Endothelial cell of umbilical vein (primary cell): ENCODE measurements at regions of chr5 and their contacts with region 1.

Region 1: DNA sequence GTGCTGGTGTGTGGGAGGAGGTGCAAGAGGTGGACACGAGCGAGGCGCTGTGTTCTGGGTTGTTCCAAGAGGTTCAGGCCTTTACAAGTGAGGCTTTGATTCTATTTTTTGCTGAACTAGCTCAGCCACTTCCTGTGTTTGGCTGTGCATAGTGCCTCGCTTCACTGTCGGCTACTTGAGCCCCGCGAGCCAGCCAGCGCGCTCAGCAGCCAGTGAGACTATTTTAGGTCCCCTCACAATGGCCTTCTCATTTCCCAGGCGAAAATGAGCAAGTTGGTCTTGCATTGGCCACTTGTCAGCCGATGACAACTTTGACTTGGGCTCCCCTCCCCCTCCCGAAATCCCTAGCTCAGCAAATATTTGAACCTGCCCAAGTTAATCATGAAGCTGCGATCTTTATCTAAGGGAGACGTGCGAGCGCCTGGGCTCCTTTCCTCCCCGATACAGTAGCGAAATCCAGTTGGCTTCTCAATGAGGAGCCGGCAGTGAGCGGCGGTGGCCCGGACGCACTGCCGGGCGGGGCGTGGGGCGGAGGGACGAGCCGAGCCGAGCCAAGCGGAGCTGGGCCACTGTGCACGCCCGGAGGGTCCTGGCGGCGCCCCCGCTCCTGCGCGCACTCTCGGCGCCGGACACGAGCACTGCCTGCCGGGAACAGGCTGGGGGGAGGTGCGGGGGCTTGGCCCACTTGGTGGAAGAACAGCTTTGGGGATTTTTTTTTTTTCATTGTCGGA is 72.6 kb downstream of the PIK3R1 start:
- DNase-seq: peak; percentile 73
- H3K4me3 ChIP-seq: peak overlapping the region; percentile 44 to 63 (median 60)
- H3K27ac ChIP-seq: peak overlapping the region; percentile 49
- H3K4me1 ChIP-seq: peaks cover 11% of the 10 kb centered on the region
- H3K27me3 ChIP-seq: no peaks in the 10 kb centered on the region
- CTCF ChIP-seq: no peak
- POLR2A ChIP-seq: peak; percentile 25

Region 2: DNA sequence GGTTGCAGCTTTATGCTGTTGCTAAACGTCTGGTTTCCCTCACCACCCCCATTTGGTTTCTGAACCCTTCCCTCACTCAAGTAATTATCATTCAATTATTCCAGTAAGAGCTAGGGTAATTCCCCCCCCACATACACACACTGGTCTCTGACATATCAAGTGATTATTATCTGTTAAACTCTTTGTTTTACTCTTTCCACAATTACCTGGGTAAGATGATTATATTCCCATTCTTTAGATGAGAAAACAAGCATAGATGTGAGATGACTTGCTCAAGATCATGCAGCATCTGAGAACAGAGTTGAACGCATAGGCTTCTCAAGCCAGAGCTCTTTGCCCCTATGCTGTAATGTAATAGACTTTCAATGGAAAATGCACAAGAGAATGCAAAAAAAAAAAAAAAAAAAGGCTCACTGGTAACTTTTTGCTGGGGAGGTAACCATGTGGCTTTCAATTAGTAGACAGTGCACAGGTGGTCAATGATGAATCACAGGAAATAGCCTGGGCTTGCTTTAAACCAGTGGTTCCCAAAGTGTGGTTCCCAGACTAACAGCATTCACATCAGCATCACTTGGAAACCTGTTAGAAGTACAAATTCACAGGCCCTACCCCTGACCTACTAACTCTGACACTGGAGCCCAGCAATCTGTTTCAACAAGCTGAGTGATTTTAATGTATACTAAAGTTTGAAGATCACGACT is 15.0 kb after region 1 on chr5:
- CTCF ChIA-PET with region 1: interaction called, 58 read pairs
- POLR2A ChIA-PET with region 1: no interaction called
- dilution Hi-C with region 1: no loop called
- intact Hi-C with region 1: no loop called
- DNase-seq: no peak
- H3K4me3 ChIP-seq: no peak overlapping the region
- H3K27ac ChIP-seq: no peak overlapping the region
- H3K4me1 ChIP-seq: no peaks in the 10 kb centered on the region
- H3K27me3 ChIP-seq: no peaks in the 10 kb centered on the region
- CTCF ChIP-seq: no peak
- POLR2A ChIP-seq: no peak

Region 3: GRCh38 chr5:68343421-68343826 is 55.3 kb after region 1 on chr5:
- CTCF ChIA-PET with region 1: interaction called, 14 read pairs
- POLR2A ChIA-PET with region 1: no interaction called
- dilution Hi-C with region 1: no loop called
- intact Hi-C with region 1: no loop called
- DNase-seq: peak; percentile 61
- H3K4me3 ChIP-seq: no peak overlapping the region
- H3K27ac ChIP-seq: no peak overlapping the region
- H3K4me1 ChIP-seq: peaks cover 4% of the 10 kb centered on the region
- H3K27me3 ChIP-seq: no peaks in the 10 kb centered on the region
- CTCF ChIP-seq: no peak
- POLR2A ChIP-seq: no peak

Region 4: DNA sequence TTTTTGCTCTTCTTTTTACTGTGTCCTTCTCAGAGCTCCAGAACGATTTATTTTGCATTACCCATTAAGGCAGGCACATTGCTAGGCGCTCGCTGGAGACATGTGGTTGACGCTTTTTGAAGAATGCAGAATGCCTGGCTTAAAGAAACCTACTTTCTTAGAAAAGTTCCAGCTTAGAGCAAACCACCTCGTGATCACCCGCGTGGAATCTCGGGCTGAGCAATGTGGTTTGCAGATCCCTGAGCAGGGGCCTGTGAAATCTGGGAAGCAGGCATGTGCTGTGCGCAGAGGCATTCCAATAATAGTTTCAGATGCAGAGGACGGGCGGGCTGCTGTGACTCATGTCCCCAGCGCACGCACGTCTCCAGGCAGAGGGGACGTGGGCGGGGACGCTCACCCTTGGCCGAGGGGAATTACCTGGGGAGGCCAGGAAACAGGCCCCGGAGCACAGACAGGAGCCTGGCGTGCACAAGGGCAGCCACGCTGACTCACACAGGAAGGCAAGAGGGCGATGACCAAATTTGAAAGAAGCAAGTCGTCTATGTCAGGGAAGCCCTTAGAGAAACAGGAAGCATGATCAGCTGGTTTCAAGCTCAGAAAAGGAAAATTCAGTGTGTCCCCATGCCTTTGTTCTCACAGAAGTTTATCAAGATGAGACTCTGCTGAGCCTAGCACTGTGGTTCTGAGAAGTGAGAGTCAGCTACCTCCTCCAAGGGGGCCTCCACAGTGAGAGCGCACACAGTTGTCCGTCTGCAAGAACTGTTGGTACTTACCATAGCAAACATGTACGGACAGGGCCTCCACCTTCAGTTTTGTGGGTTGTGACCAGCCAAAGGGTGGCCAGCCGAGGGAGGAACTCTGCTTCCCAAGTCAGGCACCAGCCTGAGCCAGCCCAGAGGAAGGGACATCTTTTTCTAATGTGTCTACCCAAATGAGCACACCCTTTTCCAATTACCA is 146.1 kb after region 1 on chr5:
- CTCF ChIA-PET with region 1: interaction called, 15 read pairs
- POLR2A ChIA-PET with region 1: no interaction called
- dilution Hi-C with region 1: no loop called
- intact Hi-C with region 1: no loop called
- DNase-seq: peak; percentile 93
- H3K4me3 ChIP-seq: no peak overlapping the region
- H3K27ac ChIP-seq: peak overlapping the region; percentile 75
- H3K4me1 ChIP-seq: peaks cover 15% of the 10 kb centered on the region
- H3K27me3 ChIP-seq: no peaks in the 10 kb centered on the region
- CTCF ChIP-seq: no peak
- POLR2A ChIP-seq: no peak

Region 5: DNA sequence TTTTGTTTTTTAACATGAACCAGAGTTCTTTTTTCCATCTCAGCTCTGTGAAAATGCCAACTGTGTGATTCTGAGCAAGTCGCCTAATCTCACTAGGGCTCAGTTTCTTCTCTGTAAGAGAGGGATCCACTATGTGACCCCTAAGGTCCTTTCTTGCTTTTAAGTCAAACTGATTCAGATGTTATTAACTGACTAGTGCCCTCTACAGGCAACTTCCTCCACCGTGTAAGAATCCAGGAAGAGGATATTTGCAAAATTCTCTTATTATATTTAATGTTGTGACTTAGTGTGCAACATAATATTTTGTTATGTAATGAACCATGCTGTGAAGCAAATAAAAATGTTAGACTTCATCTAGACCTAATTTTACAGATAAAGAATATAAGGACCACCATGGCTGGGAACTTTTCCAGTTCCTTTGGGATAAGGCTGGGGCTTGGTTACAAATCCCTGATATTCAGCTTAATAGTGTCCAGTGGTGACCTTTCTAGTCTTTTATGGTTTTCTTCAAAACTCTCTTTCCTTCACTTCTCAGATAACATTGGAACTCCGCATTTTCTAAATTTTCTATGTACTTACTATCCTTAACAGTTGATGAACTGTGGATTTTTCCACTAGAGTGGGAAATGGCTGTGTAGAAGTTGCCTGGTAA is 172.1 kb after region 1 on chr5:
- CTCF ChIA-PET with region 1: interaction called, 164 read pairs
- POLR2A ChIA-PET with region 1: no interaction called
- dilution Hi-C with region 1: no loop called
- intact Hi-C with region 1: loop called (anchors 1 kb)
- DNase-seq: peak; percentile 76
- H3K4me3 ChIP-seq: no peak overlapping the region
- H3K27ac ChIP-seq: no peak overlapping the region
- H3K4me1 ChIP-seq: peaks cover 4% of the 10 kb centered on the region
- H3K27me3 ChIP-seq: peaks cover 2 to 10% of the 10 kb centered on the region in 2 experiments
- CTCF ChIP-seq: peak; percentile 51 to 55
- POLR2A ChIP-seq: no peak

Region 6: GRCh38 chr5:68962757-68963484 is 674.8 kb after region 1 on chr5:
- CTCF ChIA-PET with region 1: interaction called, 16 read pairs
- POLR2A ChIA-PET with region 1: no interaction called
- dilution Hi-C with region 1: no loop called
- intact Hi-C with region 1: loop called (anchors 1 kb)
- DNase-seq: peak; percentile 60
- H3K4me3 ChIP-seq: no peak overlapping the region
- H3K27ac ChIP-seq: no peak overlapping the region
- H3K4me1 ChIP-seq: no peaks in the 10 kb centered on the region
- H3K27me3 ChIP-seq: no peaks in the 10 kb centered on the region
- CTCF ChIP-seq: peak; percentile 75 to 76
- POLR2A ChIP-seq: no peak